ENCODE measurements at regions of chr11 and their contacts with region 1.

Region 1: DNA sequence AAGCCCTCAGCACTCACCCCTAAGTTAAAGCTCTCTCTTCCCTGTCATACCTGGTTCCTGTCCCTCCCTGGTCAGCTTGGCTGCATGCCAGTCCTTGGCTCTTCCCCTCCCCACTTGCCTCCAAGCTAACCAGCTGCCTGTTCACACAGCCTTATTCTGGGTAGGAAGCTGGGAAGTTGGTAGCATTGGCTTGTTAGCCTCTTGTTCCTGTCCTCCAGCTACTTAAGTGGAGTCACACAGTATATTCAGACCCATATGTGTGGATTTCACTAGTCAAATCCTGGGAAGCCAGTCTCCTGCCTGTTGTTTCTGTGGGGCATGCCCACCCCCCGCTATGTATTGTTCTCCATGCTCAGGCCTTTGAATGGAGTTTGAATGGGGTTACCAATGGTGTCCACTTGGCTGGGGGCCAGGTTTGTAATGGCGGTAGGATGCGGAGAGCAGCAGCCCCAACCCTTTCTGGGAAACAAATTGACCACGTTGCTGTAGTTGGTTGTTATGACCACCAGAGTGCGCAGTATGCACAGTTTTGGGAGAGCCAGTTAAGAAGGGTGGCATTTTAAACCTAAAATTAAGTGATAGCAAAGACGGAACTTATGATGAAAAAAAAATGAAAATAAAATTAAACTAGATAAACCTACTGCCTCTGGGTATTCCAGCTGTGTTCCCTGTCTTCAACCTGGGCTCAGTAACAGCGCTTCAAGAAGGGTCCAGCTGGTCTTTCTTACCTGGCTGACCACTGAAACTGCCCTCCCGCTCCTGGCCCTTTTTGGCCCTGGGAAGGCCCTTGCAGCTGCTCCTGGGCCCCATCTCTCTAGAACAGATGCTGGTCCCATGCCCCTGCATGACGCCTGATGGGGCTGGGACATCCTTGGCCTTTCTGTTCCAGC is 10.7 kb upstream of the RPS3 start:
- DNase-seq: peak; percentile 76
- ATAC-seq: peak; percentile 70
- H3K4me3 ChIP-seq: peak overlapping the region in 1 of 3 experiments; percentile 14; a peak in 1 of 6 replicates
- H3K27ac ChIP-seq: no peak overlapping the region
- H3K4me1 ChIP-seq: peaks cover 37% of the 10 kb centered on the region
- H3K27me3 ChIP-seq: peaks cover 0 to 3% of the 10 kb centered on the region in 2 experiments; a peak in 4 of 5 replicates
- CTCF ChIP-seq: peak; percentile 89
- EP300 ChIP-seq: no peak
- POLR2A ChIP-seq: no peak
- RAD21 ChIP-seq: peak; percentile 58; the same call in 1 of the 2 replicates

Region 2: DNA sequence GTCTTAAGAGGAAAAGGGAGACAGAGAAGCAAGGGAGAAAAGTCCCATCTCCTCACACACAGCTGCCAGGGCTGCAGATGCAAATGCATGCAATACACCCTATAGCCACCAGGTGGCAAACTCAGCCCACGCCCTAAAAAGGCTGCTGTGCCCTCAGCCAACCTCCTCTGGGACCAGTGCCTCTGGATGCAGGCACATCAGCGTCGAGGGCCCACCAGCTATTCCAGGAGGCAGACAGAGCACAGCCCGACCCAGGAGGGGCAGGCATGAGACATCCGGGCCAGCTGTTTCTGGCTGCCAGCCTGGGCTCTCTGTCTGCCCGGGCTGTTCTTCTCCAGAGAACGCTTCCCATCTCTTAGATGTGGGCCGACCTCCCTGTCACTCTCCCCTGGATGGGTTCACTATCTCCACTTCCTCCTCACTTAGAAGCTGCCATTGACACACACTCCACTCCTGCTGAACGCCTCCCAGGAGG is 108.4 kb before region 1 on chr11:
- CTCF ChIA-PET with region 1: interaction called, 37 read pairs
- POLR2A ChIA-PET with region 1: no interaction called
- in situ Hi-C with region 1: loop called (anchors 5 kb)
- intact Hi-C with region 1: no loop called
- DNase-seq: peak; percentile 54
- ATAC-seq: peak; percentile 85
- H3K4me3 ChIP-seq: no peak overlapping the region
- H3K27ac ChIP-seq: no peak overlapping the region
- H3K4me1 ChIP-seq: peaks cover 22% of the 10 kb centered on the region
- H3K27me3 ChIP-seq: no peaks in the 10 kb centered on the region
- CTCF ChIP-seq: peak; percentile 96
- EP300 ChIP-seq: no peak
- POLR2A ChIP-seq: no peak
- RAD21 ChIP-seq: peak; percentile 87

Region 3: GRCh38 chr11:75328426-75329277 is 60.0 kb before region 1 on chr11:
- CTCF ChIA-PET with region 1: interaction called, 32 read pairs
- POLR2A ChIA-PET with region 1: no interaction called
- in situ Hi-C with region 1: loop called (anchors 5 kb)
- intact Hi-C with region 1: loop called (anchors 1 kb)
- DNase-seq: peak; percentile 78
- ATAC-seq: peak; percentile 95
- H3K4me3 ChIP-seq: no peak overlapping the region
- H3K27ac ChIP-seq: peak overlapping the region; percentile 27
- H3K4me1 ChIP-seq: peaks cover 42% of the 10 kb centered on the region
- H3K27me3 ChIP-seq: no peaks in the 10 kb centered on the region
- CTCF ChIP-seq: peak; percentile 94
- EP300 ChIP-seq: no peak
- POLR2A ChIP-seq: no peak
- RAD21 ChIP-seq: peak; percentile 89

Region 4: DNA sequence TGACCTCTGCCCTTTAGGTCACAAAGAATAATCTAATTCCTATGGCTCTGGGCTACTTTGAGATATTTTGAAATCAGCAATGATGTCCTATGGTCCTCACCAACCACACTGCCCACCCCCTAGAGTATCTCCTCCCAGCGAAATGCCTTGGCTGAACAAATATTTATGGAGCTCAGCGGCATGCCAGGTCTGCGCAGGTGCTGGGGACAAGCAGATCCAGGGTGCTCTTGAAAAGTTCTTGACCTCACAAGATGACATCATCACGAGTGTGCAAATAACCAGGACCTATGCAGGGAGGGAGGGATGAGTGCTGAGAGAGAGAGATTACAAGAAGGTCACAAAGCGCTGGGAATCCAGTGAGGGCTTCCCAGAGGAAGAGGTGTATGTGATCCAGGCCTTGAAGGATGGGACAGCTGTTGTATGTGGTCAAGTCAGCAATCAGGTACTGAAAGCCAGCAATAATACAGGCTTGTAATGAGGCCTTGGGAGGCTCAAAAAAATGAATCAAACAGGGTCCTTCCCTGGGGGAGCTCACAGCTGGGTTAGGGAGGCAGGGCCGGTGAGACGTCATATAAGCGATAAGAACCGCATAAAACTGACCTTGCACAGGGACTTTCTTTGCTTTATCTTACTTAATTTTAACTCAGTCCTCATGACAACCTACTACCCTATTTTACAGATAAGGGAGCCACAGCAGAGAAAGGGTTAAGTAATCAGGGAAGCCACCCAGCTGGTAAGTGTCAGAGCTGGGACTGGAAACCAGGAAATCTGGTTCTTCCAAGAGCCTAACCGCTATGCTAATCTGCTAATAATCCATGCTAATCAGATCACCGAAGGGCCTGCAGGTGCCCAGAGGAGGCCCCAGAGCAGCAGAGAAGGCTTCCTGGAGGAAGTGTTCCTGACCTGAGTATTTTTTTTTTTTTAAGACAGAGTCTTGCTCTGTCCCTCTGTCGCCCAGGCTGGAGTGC is 45.4 kb before region 1 on chr11:
- CTCF ChIA-PET with region 1: no interaction called
- POLR2A ChIA-PET with region 1: no interaction called
- in situ Hi-C with region 1: no loop called
- intact Hi-C with region 1: loop called (anchors 5 kb)
- DNase-seq: peak; percentile 95
- ATAC-seq: peak; percentile 69
- H3K4me3 ChIP-seq: no peak overlapping the region
- H3K27ac ChIP-seq: peak overlapping the region; percentile 28
- H3K4me1 ChIP-seq: peaks cover 100% of the 10 kb centered on the region
- H3K27me3 ChIP-seq: no peaks in the 10 kb centered on the region
- CTCF ChIP-seq: no peak
- EP300 ChIP-seq: peak in 1 of 2 experiments; percentile 30; a peak in 1 of 4 replicates
- POLR2A ChIP-seq: no peak
- RAD21 ChIP-seq: no peak

Region 5: DNA sequence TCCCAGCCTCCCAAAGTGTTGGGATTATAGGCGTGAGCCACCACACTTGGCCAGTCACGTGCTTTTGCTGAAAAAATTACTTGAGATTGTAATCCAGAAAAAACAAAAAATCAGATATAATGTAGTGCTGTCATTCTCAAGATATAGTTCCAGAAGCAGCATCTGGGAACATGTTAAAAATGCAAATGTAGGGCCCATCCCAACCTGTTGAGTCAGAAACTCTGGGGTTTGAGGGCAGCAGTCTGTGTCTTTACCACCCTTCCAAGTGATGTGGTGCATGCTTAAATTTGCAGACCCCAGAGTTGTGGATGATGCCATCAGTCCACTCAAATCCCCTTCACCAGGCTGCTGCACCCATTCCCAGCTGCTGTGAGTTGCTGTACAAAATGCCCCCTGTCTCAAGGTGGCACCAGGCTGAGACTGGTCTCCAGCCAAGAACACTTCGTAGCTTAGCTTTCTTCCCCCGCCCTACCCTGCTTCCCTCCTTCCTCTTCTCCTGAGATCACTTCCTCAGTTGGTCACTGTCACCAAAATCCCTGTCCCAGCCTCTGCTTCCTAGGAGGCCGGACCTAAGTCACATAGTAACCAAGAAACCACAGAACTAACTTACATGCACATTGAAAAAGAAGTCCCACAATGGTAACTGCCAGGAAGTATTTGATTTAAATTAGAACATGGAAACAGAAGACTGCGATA is 18.9 kb before region 1 on chr11:
- CTCF ChIA-PET with region 1: no interaction called
- POLR2A ChIA-PET with region 1: no interaction called
- in situ Hi-C with region 1: no loop called
- intact Hi-C with region 1: no loop called
- DNase-seq: no peak
- ATAC-seq: no peak
- H3K4me3 ChIP-seq: no peak overlapping the region
- H3K27ac ChIP-seq: no peak overlapping the region
- H3K4me1 ChIP-seq: peaks cover 23% of the 10 kb centered on the region
- H3K27me3 ChIP-seq: peaks cover 0 to 24% of the 10 kb centered on the region in 2 experiments; a peak in 4 of 5 replicates
- CTCF ChIP-seq: no peak
- EP300 ChIP-seq: no peak
- POLR2A ChIP-seq: no peak
- RAD21 ChIP-seq: no peak

Region 6: DNA sequence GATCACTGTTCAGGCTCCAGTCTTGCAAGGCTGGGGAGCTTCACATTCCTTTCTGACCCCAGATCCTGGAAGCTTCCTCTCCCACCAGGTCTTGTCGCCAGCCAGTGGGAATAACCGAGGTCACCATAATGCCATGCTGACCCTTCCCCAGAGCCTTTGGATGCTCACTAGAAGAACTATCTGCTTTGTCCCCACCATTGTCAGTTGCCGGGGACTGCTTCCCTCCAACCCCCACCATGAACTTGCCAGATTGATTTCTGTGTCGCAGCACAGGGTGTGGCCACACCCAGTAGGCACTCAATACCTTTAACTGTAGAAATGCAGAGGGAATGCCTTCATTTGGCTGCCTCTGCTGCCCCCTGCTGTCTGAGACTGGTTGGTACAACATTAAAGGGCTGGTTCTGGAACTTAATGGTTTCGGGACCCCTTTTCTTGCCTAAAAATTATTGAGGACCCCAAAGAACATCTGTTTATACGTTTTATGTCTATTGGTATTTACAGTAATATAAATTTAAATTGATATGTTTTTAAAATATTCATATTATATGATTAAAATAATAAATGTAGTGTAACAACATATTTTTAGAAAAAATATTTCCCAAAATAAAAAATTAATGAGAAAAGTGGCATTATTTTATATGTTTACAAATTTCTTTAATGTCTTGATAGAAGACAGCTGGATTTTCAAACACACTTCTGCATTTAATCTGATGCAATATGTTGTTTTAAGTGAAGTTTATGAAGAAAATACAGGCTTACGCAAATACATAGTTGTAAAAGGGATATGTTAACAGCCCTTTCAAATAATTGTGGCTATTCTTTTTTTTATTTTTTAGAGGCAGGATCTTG is 143.8 kb after region 1 on chr11:
- CTCF ChIA-PET with region 1: interaction called, 18 read pairs
- POLR2A ChIA-PET with region 1: no interaction called
- in situ Hi-C with region 1: loop called (anchors 5 kb)
- intact Hi-C with region 1: loop called (anchors 1 kb)
- DNase-seq: peak; percentile 70
- ATAC-seq: peak; percentile 40
- H3K4me3 ChIP-seq: no peak overlapping the region
- H3K27ac ChIP-seq: no peak overlapping the region
- H3K4me1 ChIP-seq: peaks cover 64% of the 10 kb centered on the region
- H3K27me3 ChIP-seq: peaks cover 0 to 14% of the 10 kb centered on the region in 2 experiments; a peak in 1 of 5 replicates
- CTCF ChIP-seq: peak; percentile 92
- EP300 ChIP-seq: no peak
- POLR2A ChIP-seq: no peak
- RAD21 ChIP-seq: peak; percentile 92

Measured in HepG2 (cell line).